ENCODE measurements at regions of chr6 and their contacts with region 1.

Region 1: GRCh38 chr6:159042003-159042825 is 2.6 kb downstream of the TAGAP start:
- DNase-seq: peak; percentile 90 to 96 (median 93)
- H3K4me3 ChIP-seq: peak overlapping the region; percentile 77 to 79
- H3K4me3 Mint-ChIP-seq: peak overlapping the region; percentile 99 to 100 (median 100)
- H3K27ac ChIP-seq: peak overlapping the region; percentile 82
- H3K27ac Mint-ChIP-seq: peak overlapping the region; percentile 98 to 100 (median 99)
- H3K4me1 ChIP-seq: peaks cover 66% of the 10 kb centered on the region
- H3K4me1 Mint-ChIP-seq: peaks cover 45 to 88% (median 59%) of the 10 kb centered on the region in 4 donors
- H3K27me3 ChIP-seq: no peaks in the 10 kb centered on the region
- H3K27me3 Mint-ChIP-seq: peaks cover 0 to 2% of the 10 kb centered on the region in 2 donors

Region 2: GRCh38 chr6:158853072-158853871 is 188.9 kb before region 1 on chr6:
- CTCF ChIA-PET with region 1: no interaction called
- POLR2A ChIA-PET with region 1: interaction called, 5 read pairs
- intact Hi-C with region 1: loop called (anchors 5 kb)
- DNase-seq: peak; percentile 87 to 97 (median 93)
- H3K4me3 ChIP-seq: peak overlapping the region; percentile 53 to 81
- H3K4me3 Mint-ChIP-seq: no peak overlapping the region
- H3K27ac ChIP-seq: peak overlapping the region; percentile 91
- H3K27ac Mint-ChIP-seq: no peak overlapping the region
- H3K4me1 ChIP-seq: peaks cover 74% of the 10 kb centered on the region
- H3K4me1 Mint-ChIP-seq: peaks cover 27 to 37% (median 29%) of the 10 kb centered on the region in 4 donors
- H3K27me3 ChIP-seq: no peaks in the 10 kb centered on the region
- H3K27me3 Mint-ChIP-seq: no peaks in the 10 kb centered on the region

Region 3: GRCh38 chr6:159008656-159009288 is 33.4 kb before region 1 on chr6:
- CTCF ChIA-PET with region 1: interaction called, 220 read pairs
- POLR2A ChIA-PET with region 1: interaction called, 651 read pairs
- intact Hi-C with region 1: loop called (anchors 1 kb)
- DNase-seq: peak; percentile 54 to 68 (median 66)
- H3K4me3 ChIP-seq: peak overlapping the region in 1 of 2 donors; percentile 29
- H3K4me3 Mint-ChIP-seq: peak overlapping the region; percentile 64 to 77 (median 72)
- H3K27ac ChIP-seq: no peak overlapping the region
- H3K27ac Mint-ChIP-seq: peak overlapping the region; percentile 7 to 90 (median 77)
- H3K4me1 ChIP-seq: peaks cover 44% of the 10 kb centered on the region
- H3K4me1 Mint-ChIP-seq: peaks cover 37 to 55% (median 47%) of the 10 kb centered on the region in 4 donors
- H3K27me3 ChIP-seq: no peaks in the 10 kb centered on the region
- H3K27me3 Mint-ChIP-seq: no peaks in the 10 kb centered on the region

Region 4: GRCh38 chr6:159056003-159056402 is 13.8 kb after region 1 on chr6:
- CTCF ChIA-PET with region 1: interaction called, 12 read pairs
- POLR2A ChIA-PET with region 1: interaction called, 564 read pairs
- intact Hi-C with region 1: loop called (anchors 1 kb)
- DNase-seq: no peak
- H3K4me3 ChIP-seq: no peak overlapping the region
- H3K4me3 Mint-ChIP-seq: peak overlapping the region; percentile 21 to 83 (median 72)
- H3K27ac ChIP-seq: peak overlapping the region; percentile 17
- H3K27ac Mint-ChIP-seq: peak overlapping the region; percentile 81 to 92 (median 86)
- H3K4me1 ChIP-seq: peaks cover 64% of the 10 kb centered on the region
- H3K4me1 Mint-ChIP-seq: peaks cover 38 to 74% (median 56%) of the 10 kb centered on the region in 4 donors
- H3K27me3 ChIP-seq: no peaks in the 10 kb centered on the region
- H3K27me3 Mint-ChIP-seq: no peaks in the 10 kb centered on the region

Region 5: GRCh38 chr6:159074120-159074684 is 32.0 kb after region 1 on chr6:
- CTCF ChIA-PET with region 1: interaction called, 3 read pairs
- POLR2A ChIA-PET with region 1: interaction called, 16 read pairs
- intact Hi-C with region 1: no loop called
- DNase-seq: no peak
- H3K4me3 ChIP-seq: no peak overlapping the region
- H3K4me3 Mint-ChIP-seq: no peak overlapping the region
- H3K27ac ChIP-seq: no peak overlapping the region
- H3K27ac Mint-ChIP-seq: no peak overlapping the region
- H3K4me1 ChIP-seq: peaks cover 12% of the 10 kb centered on the region
- H3K4me1 Mint-ChIP-seq: peaks cover 20 to 37% (median 27%) of the 10 kb centered on the region in 4 donors
- H3K27me3 ChIP-seq: no peaks in the 10 kb centered on the region
- H3K27me3 Mint-ChIP-seq: peaks cover 3% of the 10 kb centered on the region in 2 donors

Region 6: DNA sequence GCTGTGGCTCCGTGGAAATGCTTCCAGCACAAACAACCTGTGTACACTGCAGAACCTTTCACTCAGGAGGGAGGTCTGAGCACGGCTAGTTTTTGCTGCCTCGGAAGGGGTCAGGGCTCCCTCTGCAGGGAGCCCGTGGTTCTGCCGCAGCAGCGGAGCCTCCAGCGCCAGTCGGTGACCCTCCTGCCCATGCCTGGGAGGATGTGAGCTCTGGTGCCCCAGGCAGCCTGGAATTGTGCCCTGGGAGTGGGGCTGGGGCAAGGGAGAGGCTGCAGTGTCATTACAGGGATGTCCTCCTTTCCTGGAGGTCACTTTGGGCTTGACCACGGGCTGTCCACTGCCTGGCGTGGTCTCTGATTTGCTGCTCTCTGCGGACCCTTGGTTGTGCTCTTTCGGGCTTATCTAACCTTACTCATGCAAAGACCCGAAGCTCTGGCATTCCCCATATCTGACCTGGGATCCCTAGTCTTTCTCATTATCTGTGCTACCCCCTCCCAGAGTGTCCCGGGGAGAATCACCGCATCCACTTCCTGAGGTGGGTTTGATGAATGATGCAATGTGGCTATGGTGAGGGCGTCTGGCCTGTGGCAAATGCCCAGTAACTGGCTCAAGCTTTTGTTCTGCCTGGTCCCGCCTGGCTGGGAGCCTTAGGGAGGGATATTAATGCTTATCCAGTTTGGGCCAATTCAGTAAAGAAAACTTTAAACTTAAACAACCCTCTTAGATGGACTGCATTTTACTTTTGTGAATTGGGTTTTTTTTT is 62.1 kb after region 1 on chr6:
- CTCF ChIA-PET with region 1: interaction called, 333 read pairs
- POLR2A ChIA-PET with region 1: interaction called, 646 read pairs
- intact Hi-C with region 1: loop called (anchors 1 kb)
- DNase-seq: peak; percentile 75 to 81 (median 78)
- H3K4me3 ChIP-seq: no peak overlapping the region
- H3K4me3 Mint-ChIP-seq: peak overlapping the region; percentile 54 to 82 (median 71)
- H3K27ac ChIP-seq: peak overlapping the region; percentile 25
- H3K27ac Mint-ChIP-seq: peak overlapping the region; percentile 48 to 95 (median 86)
- H3K4me1 ChIP-seq: peaks cover 74% of the 10 kb centered on the region
- H3K4me1 Mint-ChIP-seq: peaks cover 57 to 85% (median 66%) of the 10 kb centered on the region in 4 donors
- H3K27me3 ChIP-seq: no peaks in the 10 kb centered on the region
- H3K27me3 Mint-ChIP-seq: no peaks in the 10 kb centered on the region

Region 7: GRCh38 chr6:159134701-159135364 is 92.6 kb after region 1 on chr6:
- CTCF ChIA-PET with region 1: interaction called, 47 read pairs
- POLR2A ChIA-PET with region 1: interaction called, 7 read pairs
- intact Hi-C with region 1: loop called (anchors 1 kb)
- DNase-seq: peak; percentile 69 to 77 (median 73)
- H3K4me3 ChIP-seq: no peak overlapping the region
- H3K4me3 Mint-ChIP-seq: no peak overlapping the region
- H3K27ac ChIP-seq: no peak overlapping the region
- H3K27ac Mint-ChIP-seq: no peak overlapping the region
- H3K4me1 ChIP-seq: peaks cover 6% of the 10 kb centered on the region
- H3K4me1 Mint-ChIP-seq: peaks cover 0 to 6% (median 4%) of the 10 kb centered on the region in 4 donors
- H3K27me3 ChIP-seq: no peaks in the 10 kb centered on the region
- H3K27me3 Mint-ChIP-seq: peaks cover 5 to 8% of the 10 kb centered on the region in 2 donors

Region 8: DNA sequence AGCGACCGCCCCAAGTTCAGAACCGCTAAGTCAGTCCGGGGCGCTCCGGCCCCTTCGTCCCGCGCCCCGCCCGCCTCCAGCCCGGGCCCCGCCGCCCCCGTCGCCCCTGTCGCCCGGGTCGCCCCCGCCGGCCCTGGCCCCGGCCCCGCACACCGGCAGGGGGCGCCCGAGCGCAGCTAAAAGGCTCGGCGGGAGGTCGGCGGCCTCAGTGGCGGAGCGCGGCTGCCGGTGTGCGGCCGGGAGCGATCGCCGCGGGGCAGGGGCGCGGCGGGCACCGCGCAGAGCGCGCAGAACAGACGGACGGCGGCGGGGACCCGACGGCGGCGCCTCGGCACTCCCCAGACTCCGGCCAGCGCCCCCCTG is 127.0 kb after region 1 on chr6 and contains the start of gene FNDC1:
- CTCF ChIA-PET with region 1: no interaction called
- POLR2A ChIA-PET with region 1: no interaction called
- intact Hi-C with region 1: no loop called
- DNase-seq: peak in 4 of 5 donors; percentile 43 to 63 (median 52)
- H3K4me3 ChIP-seq: peak within 1 kb of the TSS in 1 of 2 donors; percentile 10
- H3K4me3 Mint-ChIP-seq: peak within 1 kb of the TSS; percentile 69 to 79 (median 76)
- H3K27ac ChIP-seq: no peak within 1 kb of the TSS
- H3K27ac Mint-ChIP-seq: peak within 1 kb of the TSS in 1 of 7 donors; percentile 62
- H3K4me1 ChIP-seq: peaks cover 17% of the 10 kb centered on the region
- H3K4me1 Mint-ChIP-seq: peaks cover 3 to 30% (median 17%) of the 10 kb centered on the region in 4 donors
- H3K27me3 ChIP-seq: peaks cover 41% of the 10 kb centered on the region
- H3K27me3 Mint-ChIP-seq: peaks cover 32 to 59% of the 10 kb centered on the region in 2 donors
- total RNA-seq, gene FNDC1: not detected

Measured in CD4-positive, alpha-beta memory T cell (primary cell).